CD4-positive, alpha-beta T cell (primary cell): ENCODE measurements at regions of chr16 and their contacts with region 1.

Region 1: DNA sequence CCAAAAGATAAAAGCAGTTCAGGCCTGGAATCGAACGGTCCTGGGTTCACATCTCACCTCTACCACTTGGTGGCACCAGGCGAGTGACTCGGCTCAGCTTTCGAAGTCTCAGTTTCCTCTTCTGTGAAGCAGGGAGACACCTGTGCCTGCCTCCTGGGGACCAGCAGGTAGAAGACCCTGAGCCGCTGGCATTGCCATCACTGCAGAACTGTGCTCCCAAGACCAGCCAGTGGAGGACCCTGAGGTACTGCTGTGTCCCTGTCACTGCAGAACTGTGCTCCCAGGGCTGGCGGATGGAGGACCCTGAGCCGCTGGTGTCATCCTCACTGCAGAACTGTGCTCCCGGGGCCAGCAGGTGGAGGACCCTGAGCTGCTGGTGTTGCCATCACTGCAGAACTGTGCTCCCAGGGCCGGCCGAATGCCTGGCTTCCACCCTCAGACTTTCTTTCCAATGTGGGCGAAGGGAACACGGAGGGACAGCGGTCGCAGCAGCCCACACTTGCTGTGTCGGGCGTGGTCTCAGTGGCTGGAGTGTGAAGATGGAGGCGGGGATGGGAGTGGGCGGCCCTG is 8.7 kb upstream of the SLC7A5 start:
- DNase-seq: peak in 3 of 14 experiments; percentile 30 to 38 (median 30)
- ATAC-seq: no peak
- H3K4me3 ChIP-seq: no peak overlapping the region
- H3K4me3 Mint-ChIP-seq: no peak overlapping the region
- H3K27ac ChIP-seq: no peak overlapping the region
- H3K27ac Mint-ChIP-seq: no peak overlapping the region
- H3K4me1 ChIP-seq: peaks cover 11% of the 10 kb centered on the region
- H3K4me1 Mint-ChIP-seq: peaks cover 11% of the 10 kb centered on the region
- H3K27me3 ChIP-seq: no peaks in the 10 kb centered on the region
- H3K27me3 Mint-ChIP-seq: no peaks in the 10 kb centered on the region
- CTCF ChIP-seq: no peak

Region 2: GRCh38 chr16:87550496-87550961 is 327.5 kb before region 1 on chr16:
- CTCF ChIA-PET with region 1: no interaction called
- POLR2A ChIA-PET with region 1: no interaction called
- intact Hi-C with region 1: loop called in 1 of 2 experiments (anchors 5 kb)
- DNase-seq: peak; percentile 39 to 75 (median 55)
- ATAC-seq: peak; percentile 41
- H3K4me3 ChIP-seq: no peak overlapping the region
- H3K4me3 Mint-ChIP-seq: no peak overlapping the region
- H3K27ac ChIP-seq: no peak overlapping the region
- H3K27ac Mint-ChIP-seq: no peak overlapping the region
- H3K4me1 ChIP-seq: no peaks in the 10 kb centered on the region
- H3K4me1 Mint-ChIP-seq: no peaks in the 10 kb centered on the region
- H3K27me3 ChIP-seq: no peaks in the 10 kb centered on the region
- H3K27me3 Mint-ChIP-seq: peaks cover 39% of the 10 kb centered on the region
- CTCF ChIP-seq: peak; percentile 97